Naive thymus-derived CD4-positive, alpha-beta T cell (primary cell): ENCODE measurements at regions of chr11 and their contacts with region 1.

Region 1: GRCh38 chr11:14907411-14908213 is 15.6 kb upstream of the CYP2R1 start:
- DNase-seq: peak; percentile 64 to 85 (median 75)
- ATAC-seq: peak; percentile 76
- H3K4me3 ChIP-seq: no peak overlapping the region
- H3K4me3 Mint-ChIP-seq: peak overlapping the region in 5 of 10 donors; percentile 1 to 98 (median 12)
- H3K27ac ChIP-seq: no peak overlapping the region
- H3K27ac Mint-ChIP-seq: peak overlapping the region in 8 of 9 donors; percentile 19 to 94 (median 73)
- H3K4me1 ChIP-seq: peaks cover 0 to 9% of the 10 kb centered on the region in 2 donors
- H3K4me1 Mint-ChIP-seq: peaks cover 26 to 54% (median 43%) of the 10 kb centered on the region in 7 donors
- H3K27me3 ChIP-seq: no peaks in the 10 kb centered on the region
- H3K27me3 Mint-ChIP-seq: no peaks in the 10 kb centered on the region

Region 2: DNA sequence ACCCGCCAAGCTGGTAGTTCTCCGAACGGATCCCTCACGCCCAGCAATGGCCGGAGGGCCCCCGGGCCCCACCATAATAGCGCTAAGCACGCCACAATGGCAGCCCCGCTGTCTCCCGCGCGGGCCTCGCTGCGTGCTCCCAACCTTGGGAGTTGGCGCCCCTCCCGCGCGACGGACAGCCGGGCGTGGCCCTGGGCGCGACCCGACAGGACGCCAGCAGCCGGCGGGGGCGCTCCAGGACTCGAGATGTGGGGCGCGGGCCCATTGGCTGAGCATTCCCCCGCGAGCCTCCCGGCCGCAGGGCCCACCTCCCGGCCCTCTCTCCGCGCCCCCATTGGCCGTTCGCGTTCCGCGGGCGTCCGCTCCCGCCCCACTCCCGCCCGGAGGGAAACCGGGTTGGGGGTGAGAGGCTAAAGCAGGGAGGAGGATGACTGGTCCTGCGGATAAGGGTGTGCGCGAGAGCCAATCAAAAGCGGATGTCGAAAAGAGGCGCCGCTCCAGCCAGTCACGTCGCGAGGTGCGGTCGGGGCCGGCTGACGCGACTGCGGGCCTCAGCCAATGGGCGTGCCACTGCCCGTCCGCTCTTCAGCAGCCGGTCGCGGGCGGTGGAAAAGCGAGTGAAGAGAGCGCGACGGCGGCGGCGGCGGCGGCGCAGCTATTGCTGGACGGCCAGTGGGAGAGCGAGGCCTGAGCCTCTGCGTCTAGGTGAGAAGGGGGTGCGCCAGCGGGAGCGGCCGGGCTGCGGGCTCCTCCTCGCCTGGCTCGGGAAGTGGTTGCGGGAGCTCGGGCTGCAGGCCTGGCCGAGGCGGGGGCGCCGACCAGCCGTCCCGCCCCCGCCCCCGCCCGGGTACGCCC is 1239.3 kb before region 1 on chr11 and contains the start of gene FAR1:
- CTCF ChIA-PET with region 1: no interaction called
- POLR2A ChIA-PET with region 1: no interaction called
- intact Hi-C with region 1: loop called in 1 of 2 experiments (anchors 5 kb)
- DNase-seq: peak; percentile 89 to 97 (median 96)
- ATAC-seq: peak; percentile 94
- H3K4me3 ChIP-seq: peak within 1 kb of the TSS; percentile 90
- H3K4me3 Mint-ChIP-seq: peak within 1 kb of the TSS; percentile 90 to 100 (median 97)
- H3K27ac ChIP-seq: peak within 1 kb of the TSS; percentile 69
- H3K27ac Mint-ChIP-seq: peak within 1 kb of the TSS; percentile 69 to 99 (median 93)
- H3K4me1 ChIP-seq: peaks cover 14 to 17% of the 10 kb centered on the region in 2 donors
- H3K4me1 Mint-ChIP-seq: peaks cover 37 to 48% (median 45%) of the 10 kb centered on the region in 7 donors
- H3K27me3 ChIP-seq: no peaks in the 10 kb centered on the region
- H3K27me3 Mint-ChIP-seq: peaks cover 0 to 21% (median 7%) of the 10 kb centered on the region in 5 donors
- total RNA-seq, gene FAR1: 31.4 to 53.7 (median 33.8) TPM

Region 3: DNA sequence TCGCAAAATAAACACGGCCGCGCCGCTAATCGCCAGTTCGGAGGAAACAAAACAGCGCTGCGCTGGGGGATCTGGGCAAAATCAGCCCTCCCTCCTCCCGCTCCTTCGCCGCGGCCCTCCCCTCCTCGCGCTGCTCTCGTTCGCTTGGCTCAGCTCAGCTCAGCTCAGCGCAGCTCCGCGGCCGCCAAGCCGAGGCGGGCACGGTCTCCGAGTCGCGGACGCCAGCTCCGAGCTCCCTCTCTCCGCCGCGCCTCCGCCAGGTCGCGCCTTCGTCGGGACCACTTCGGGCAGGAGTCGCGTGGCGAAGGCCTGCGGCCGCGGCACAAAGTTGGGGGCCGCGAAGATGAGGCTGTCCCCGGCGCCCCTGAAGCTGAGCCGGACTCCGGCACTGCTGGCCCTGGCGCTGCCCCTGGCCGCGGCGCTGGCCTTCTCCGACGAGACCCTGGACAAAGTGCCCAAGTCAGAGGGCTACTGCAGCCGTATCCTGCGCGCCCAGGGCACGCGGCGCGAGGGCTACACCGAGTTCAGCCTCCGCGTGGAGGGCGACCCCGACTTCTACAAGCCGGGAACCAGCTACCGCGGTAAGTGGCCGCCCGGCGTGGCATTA is 944.9 kb before region 1 on chr11 and contains the start of gene SPON1:
- CTCF ChIA-PET with region 1: no interaction called
- POLR2A ChIA-PET with region 1: no interaction called
- intact Hi-C with region 1: loop called (anchors 10 kb)
- DNase-seq: peak in 7 of 9 donors; percentile 34 to 57 (median 42)
- ATAC-seq: peak; percentile 81
- H3K4me3 ChIP-seq: peak within 1 kb of the TSS; percentile 34
- H3K4me3 Mint-ChIP-seq: peak within 1 kb of the TSS; percentile 68 to 86 (median 77)
- H3K27ac ChIP-seq: no peak within 1 kb of the TSS
- H3K27ac Mint-ChIP-seq: peak within 1 kb of the TSS in 1 of 9 donors; percentile 55
- H3K4me1 ChIP-seq: peaks cover 10 to 16% of the 10 kb centered on the region in 2 donors
- H3K4me1 Mint-ChIP-seq: peaks cover 4 to 18% (median 13%) of the 10 kb centered on the region in 7 donors
- H3K27me3 ChIP-seq: peaks cover 6 to 21% of the 10 kb centered on the region in 2 donors
- H3K27me3 Mint-ChIP-seq: peaks cover 55 to 88% (median 62%) of the 10 kb centered on the region in 5 donors
- total RNA-seq, gene SPON1: 1.6 to 20.8 (median 3.9) TPM

Region 4: DNA sequence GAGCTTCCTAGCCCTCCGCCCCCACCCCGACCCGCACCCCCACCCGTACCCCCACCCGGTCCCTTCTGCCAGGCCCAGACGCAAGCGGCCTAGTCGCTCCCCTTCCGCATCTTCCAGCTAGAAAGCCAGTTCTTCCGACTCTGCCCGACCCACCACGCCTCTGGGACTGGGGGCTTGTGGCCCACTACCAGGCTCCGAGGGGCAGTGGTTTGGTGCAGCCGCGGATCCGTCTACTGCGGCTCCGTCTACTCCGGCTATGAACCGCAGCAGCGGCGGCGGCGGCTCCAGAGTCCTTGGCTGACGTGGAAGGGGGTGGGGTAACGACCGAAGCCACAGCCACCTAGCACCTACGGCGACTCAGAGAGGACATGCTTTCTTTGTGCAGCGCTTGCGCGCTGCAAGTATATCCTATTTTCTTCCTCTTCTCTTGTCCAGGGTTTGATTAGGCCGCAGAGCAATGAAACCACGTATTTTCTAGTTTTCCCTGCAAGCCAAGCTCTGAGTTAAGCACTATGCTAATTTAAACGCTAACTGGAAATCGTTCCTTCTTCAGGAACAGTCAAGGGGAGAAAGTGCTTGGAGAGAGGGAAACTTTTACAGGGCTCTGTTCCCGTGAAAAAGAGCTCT is 407.9 kb before region 1 on chr11 and contains the start of gene COPB1:
- CTCF ChIA-PET with region 1: interaction called, 5 read pairs
- POLR2A ChIA-PET with region 1: interaction called, 3 read pairs
- intact Hi-C with region 1: loop called in 1 of 2 experiments (anchors 1 kb)
- DNase-seq: peak; percentile 82 to 94 (median 92)
- ATAC-seq: peak; percentile 99
- H3K4me3 ChIP-seq: peak within 1 kb of the TSS; percentile 70
- H3K4me3 Mint-ChIP-seq: peak within 1 kb of the TSS; percentile 79 to 98 (median 92)
- H3K27ac ChIP-seq: peak within 1 kb of the TSS; percentile 91
- H3K27ac Mint-ChIP-seq: peak within 1 kb of the TSS; percentile 87 to 98 (median 94)
- H3K4me1 ChIP-seq: peaks cover 0 to 21% of the 10 kb centered on the region in 2 donors
- H3K4me1 Mint-ChIP-seq: peaks cover 27 to 54% (median 47%) of the 10 kb centered on the region in 7 donors
- H3K27me3 ChIP-seq: no peaks in the 10 kb centered on the region
- H3K27me3 Mint-ChIP-seq: no peaks in the 10 kb centered on the region
- total RNA-seq, gene COPB1: 73.4 to 102 (median 75.9) TPM

Region 5: DNA sequence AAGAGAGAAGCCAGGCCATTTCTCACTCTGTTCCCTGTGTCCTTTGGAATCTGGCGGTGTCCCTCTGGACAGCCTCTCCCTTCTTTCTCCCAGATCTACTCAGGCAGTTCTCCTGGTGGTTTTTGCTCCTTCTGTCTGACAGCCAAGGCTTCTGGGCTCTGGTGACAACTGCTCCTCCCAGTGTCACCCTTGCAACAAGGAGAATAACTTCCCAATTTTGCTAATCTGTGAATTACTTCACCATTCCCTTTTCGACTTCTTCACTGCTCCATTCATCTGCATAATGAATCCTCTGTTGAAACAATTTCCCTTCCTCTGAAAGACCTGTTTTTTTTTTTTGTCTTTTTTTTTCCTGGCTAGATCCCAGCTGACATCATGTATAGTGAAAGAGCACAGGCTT is 320.4 kb before region 1 on chr11:
- CTCF ChIA-PET with region 1: no interaction called
- POLR2A ChIA-PET with region 1: no interaction called
- intact Hi-C with region 1: no loop called
- DNase-seq: no peak
- ATAC-seq: no peak
- H3K4me3 ChIP-seq: no peak overlapping the region
- H3K4me3 Mint-ChIP-seq: no peak overlapping the region
- H3K27ac ChIP-seq: no peak overlapping the region
- H3K27ac Mint-ChIP-seq: peak overlapping the region in 7 of 9 donors; percentile 51 to 91 (median 77)
- H3K4me1 ChIP-seq: no peaks in the 10 kb centered on the region
- H3K4me1 Mint-ChIP-seq: peaks cover 28 to 71% (median 63%) of the 10 kb centered on the region in 7 donors
- H3K27me3 ChIP-seq: no peaks in the 10 kb centered on the region
- H3K27me3 Mint-ChIP-seq: no peaks in the 10 kb centered on the region

Region 6: DNA sequence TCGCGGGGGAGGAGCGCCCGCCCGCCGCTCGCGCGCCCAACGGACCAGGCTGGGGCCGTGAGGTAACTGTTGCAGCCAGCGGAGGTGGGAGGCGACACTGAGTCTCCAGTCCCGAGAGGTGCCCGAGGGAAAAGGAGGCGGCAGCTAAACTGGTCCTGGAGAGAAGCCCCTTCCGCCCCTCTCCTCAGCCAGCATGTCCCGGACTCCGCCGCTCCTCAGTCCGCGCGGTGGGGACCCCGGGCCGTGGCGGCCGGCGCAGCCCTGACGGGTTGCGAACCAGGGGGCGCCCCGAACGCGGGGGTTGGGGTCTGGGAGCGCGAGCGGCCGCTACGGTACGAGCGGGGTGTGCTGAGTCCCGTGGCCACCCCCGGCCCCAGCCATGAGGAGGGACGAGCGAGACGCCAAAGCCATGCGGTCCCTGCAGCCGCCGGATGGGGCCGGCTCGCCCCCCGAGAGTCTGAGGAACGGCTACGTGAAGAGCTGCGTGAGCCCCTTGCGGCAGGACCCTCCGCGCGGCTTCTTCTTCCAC is 263.9 kb before region 1 on chr11 and contains the start of gene PDE3B:
- CTCF ChIA-PET with region 1: interaction called, 5 read pairs
- POLR2A ChIA-PET with region 1: interaction called, 7 read pairs
- intact Hi-C with region 1: loop called (anchors 1 to 2 kb)
- DNase-seq: peak; percentile 45 to 79 (median 61)
- ATAC-seq: peak; percentile 78
- H3K4me3 ChIP-seq: peak within 1 kb of the TSS; percentile 68
- H3K4me3 Mint-ChIP-seq: peak within 1 kb of the TSS; percentile 90 to 99 (median 94)
- H3K27ac ChIP-seq: peak within 1 kb of the TSS; percentile 89
- H3K27ac Mint-ChIP-seq: peak within 1 kb of the TSS; percentile 69 to 95 (median 92)
- H3K4me1 ChIP-seq: peaks cover 26 to 33% of the 10 kb centered on the region in 2 donors
- H3K4me1 Mint-ChIP-seq: peaks cover 22 to 65% (median 49%) of the 10 kb centered on the region in 7 donors
- H3K27me3 ChIP-seq: no peaks in the 10 kb centered on the region
- H3K27me3 Mint-ChIP-seq: no peaks in the 10 kb centered on the region
- total RNA-seq, gene PDE3B: 79.6 to 268 (median 151) TPM

Region 7: DNA sequence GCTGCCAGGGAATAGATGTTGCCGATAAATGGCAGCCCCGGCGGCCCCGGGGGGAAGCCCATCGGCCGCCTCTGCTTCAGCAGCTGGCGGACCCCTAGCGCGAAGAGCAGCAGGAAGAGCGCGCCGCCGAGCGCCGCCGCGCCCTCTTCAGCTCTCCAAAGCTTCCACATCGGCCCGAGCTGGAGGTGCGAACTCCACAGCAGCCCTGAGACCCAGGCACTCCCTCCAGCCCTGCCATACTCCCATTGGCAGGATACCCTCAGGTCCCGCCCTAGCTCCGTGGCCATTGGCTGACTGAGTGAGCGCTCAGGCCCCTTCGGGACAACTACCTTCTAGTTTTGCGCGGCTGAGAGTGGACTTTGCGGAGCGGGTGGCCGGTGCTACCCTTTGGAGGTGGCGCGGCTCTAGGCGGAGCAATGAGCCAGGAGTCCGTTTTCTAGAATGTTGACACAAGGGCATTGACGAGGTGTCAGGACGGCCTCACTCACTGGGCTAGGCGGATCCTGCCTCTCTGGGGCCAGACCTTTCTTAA is 15.5 kb before region 1 on chr11 and contains the start of gene CYP2R1:
- CTCF ChIA-PET with region 1: interaction called, 23 read pairs
- POLR2A ChIA-PET with region 1: interaction called, 9 read pairs
- intact Hi-C with region 1: loop called (anchors 1 kb)
- DNase-seq: peak in 8 of 9 donors; percentile 76 to 91 (median 89)
- ATAC-seq: peak; percentile 93
- H3K4me3 ChIP-seq: peak within 1 kb of the TSS; percentile 83
- H3K4me3 Mint-ChIP-seq: peak within 1 kb of the TSS; percentile 88 to 99 (median 96)
- H3K27ac ChIP-seq: peak within 1 kb of the TSS; percentile 80
- H3K27ac Mint-ChIP-seq: peak within 1 kb of the TSS; percentile 91 to 98 (median 96)
- H3K4me1 ChIP-seq: peaks cover 3 to 27% of the 10 kb centered on the region in 2 donors
- H3K4me1 Mint-ChIP-seq: peaks cover 17 to 66% (median 44%) of the 10 kb centered on the region in 7 donors
- H3K27me3 ChIP-seq: no peaks in the 10 kb centered on the region
- H3K27me3 Mint-ChIP-seq: no peaks in the 10 kb centered on the region
- total RNA-seq, gene CYP2R1: 13.3 to 18.6 (median 14.7) TPM

Region 8: DNA sequence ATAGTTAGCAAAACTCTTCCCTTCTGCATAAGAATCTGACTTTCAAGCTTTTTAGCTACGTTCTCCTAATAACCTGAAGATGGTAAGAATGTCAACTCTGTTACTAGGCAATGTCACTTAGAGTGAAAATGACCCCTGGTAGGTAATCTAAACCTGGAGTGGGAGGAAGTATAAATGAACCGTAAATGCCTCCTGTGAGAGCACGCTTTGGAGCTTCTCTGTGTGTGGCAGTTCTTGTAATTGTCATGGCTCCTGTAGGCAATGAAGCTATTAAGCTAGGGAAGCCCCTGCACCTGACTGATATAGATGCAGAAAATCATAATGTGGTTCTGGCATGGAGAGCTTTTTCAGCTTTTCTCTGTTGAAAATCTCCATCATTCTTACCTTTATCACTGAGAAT is 35.1 kb after region 1 on chr11:
- CTCF ChIA-PET with region 1: no interaction called
- POLR2A ChIA-PET with region 1: no interaction called
- intact Hi-C with region 1: no loop called
- DNase-seq: no peak
- ATAC-seq: no peak
- H3K4me3 ChIP-seq: no peak overlapping the region
- H3K4me3 Mint-ChIP-seq: no peak overlapping the region
- H3K27ac ChIP-seq: no peak overlapping the region
- H3K27ac Mint-ChIP-seq: no peak overlapping the region
- H3K4me1 ChIP-seq: no peaks in the 10 kb centered on the region
- H3K4me1 Mint-ChIP-seq: peaks cover 0 to 1% (median 0%) of the 10 kb centered on the region in 7 donors
- H3K27me3 ChIP-seq: no peaks in the 10 kb centered on the region
- H3K27me3 Mint-ChIP-seq: no peaks in the 10 kb centered on the region

Region 9: GRCh38 chr11:15006139-15006759 is 98.6 kb after region 1 on chr11:
- CTCF ChIA-PET with region 1: interaction called, 51 read pairs
- POLR2A ChIA-PET with region 1: no interaction called
- intact Hi-C with region 1: loop called (anchors 1 kb)
- DNase-seq: peak in 7 of 9 donors; percentile 7 to 46 (median 34)
- ATAC-seq: peak; percentile 64
- H3K4me3 ChIP-seq: no peak overlapping the region
- H3K4me3 Mint-ChIP-seq: no peak overlapping the region
- H3K27ac ChIP-seq: no peak overlapping the region
- H3K27ac Mint-ChIP-seq: no peak overlapping the region
- H3K4me1 ChIP-seq: no peaks in the 10 kb centered on the region
- H3K4me1 Mint-ChIP-seq: no peaks in the 10 kb centered on the region
- H3K27me3 ChIP-seq: no peaks in the 10 kb centered on the region
- H3K27me3 Mint-ChIP-seq: peaks cover 18 to 76% (median 36%) of the 10 kb centered on the region in 5 donors

Region 10: GRCh38 chr11:16347928-16348685 is 1440.5 kb after region 1 on chr11:
- CTCF ChIA-PET with region 1: no interaction called
- POLR2A ChIA-PET with region 1: no interaction called
- intact Hi-C with region 1: no loop called
- DNase-seq: no peak
- ATAC-seq: no peak
- H3K4me3 ChIP-seq: no peak overlapping the region
- H3K4me3 Mint-ChIP-seq: no peak overlapping the region
- H3K27ac ChIP-seq: no peak overlapping the region
- H3K27ac Mint-ChIP-seq: no peak overlapping the region
- H3K4me1 ChIP-seq: no peaks in the 10 kb centered on the region
- H3K4me1 Mint-ChIP-seq: no peaks in the 10 kb centered on the region
- H3K27me3 ChIP-seq: no peaks in the 10 kb centered on the region
- H3K27me3 Mint-ChIP-seq: peaks cover 0 to 7% (median 0%) of the 10 kb centered on the region in 5 donors